Panc1 (cell line): ENCODE measurements at regions of chr1 and their contacts with region 1.

Region 1: DNA sequence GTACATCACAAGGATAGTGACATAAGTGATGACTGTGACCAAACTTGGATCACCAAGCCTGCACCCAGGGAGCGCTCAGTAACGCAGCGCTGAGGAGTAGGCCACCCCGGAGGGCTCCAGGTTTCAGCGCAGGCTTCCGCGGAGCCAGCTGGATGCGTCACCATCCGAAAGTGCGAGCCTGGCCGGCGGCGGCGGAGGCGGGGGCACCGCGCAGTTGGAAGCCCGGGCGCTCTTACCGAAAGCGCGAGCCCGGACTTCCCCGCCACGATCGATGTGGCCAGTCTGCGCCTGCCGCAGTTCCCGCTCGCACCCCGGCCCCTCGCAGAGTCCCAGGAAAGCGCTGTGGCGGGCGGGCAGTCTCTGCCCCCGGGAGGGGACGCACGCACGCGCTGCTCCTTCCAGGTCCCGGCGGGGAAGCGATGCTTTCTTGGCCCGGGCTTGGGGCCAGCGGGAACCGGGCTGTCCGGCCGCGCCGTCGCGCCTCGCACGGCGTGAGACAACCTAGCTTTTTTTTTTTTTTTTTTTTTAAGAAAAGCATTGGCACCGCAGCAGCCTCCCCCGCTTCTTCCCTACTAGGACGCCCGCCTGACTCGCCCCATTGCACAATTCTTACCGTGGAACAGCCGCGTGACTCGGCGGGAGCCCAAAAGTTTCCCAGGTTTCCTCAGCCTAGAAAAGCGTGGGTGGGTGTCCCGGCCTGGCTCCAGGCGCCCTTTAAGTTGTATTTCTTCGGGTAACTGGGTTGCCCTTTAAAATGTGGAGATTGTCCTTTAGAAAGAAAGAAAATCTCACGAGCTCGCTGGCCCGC is 36.4 kb upstream of the JAK1 start:
- DNase-seq: peak; percentile 25
- ATAC-seq: peak; percentile 96
- H3K4me3 ChIP-seq: peak overlapping the region; percentile 54 to 69
- H3K27ac ChIP-seq: peak overlapping the region; percentile 81
- H3K4me1 ChIP-seq: peaks cover 5% of the 10 kb centered on the region
- H3K27me3 ChIP-seq: no peaks in the 10 kb centered on the region; the same call in 1 of the 2 replicates
- CTCF ChIP-seq: no peak

Region 2: GRCh38 chr1:64686828-64687724 is 315.6 kb before region 1 on chr1:
- CTCF ChIA-PET with region 1: no interaction called
- POLR2A ChIA-PET with region 1: no interaction called
- in situ Hi-C with region 1: no loop called
- intact Hi-C with region 1: no loop called
- DNase-seq: peak; percentile 30
- ATAC-seq: peak; percentile 81
- H3K4me3 ChIP-seq: no peak overlapping the region
- H3K27ac ChIP-seq: no peak overlapping the region
- H3K4me1 ChIP-seq: no peaks in the 10 kb centered on the region
- H3K27me3 ChIP-seq: no peaks in the 10 kb centered on the region
- CTCF ChIP-seq: peak; percentile 79

Region 3: GRCh38 chr1:64973061-64973647 is 29.6 kb before region 1 on chr1:
- CTCF ChIA-PET with region 1: no interaction called
- POLR2A ChIA-PET with region 1: interaction called, 10 read pairs
- in situ Hi-C with region 1: no loop called
- intact Hi-C with region 1: no loop called
- DNase-seq: no peak
- ATAC-seq: no peak
- H3K4me3 ChIP-seq: no peak overlapping the region
- H3K27ac ChIP-seq: no peak overlapping the region
- H3K4me1 ChIP-seq: no peaks in the 10 kb centered on the region
- H3K27me3 ChIP-seq: no peaks in the 10 kb centered on the region
- CTCF ChIP-seq: no peak

Region 4: DNA sequence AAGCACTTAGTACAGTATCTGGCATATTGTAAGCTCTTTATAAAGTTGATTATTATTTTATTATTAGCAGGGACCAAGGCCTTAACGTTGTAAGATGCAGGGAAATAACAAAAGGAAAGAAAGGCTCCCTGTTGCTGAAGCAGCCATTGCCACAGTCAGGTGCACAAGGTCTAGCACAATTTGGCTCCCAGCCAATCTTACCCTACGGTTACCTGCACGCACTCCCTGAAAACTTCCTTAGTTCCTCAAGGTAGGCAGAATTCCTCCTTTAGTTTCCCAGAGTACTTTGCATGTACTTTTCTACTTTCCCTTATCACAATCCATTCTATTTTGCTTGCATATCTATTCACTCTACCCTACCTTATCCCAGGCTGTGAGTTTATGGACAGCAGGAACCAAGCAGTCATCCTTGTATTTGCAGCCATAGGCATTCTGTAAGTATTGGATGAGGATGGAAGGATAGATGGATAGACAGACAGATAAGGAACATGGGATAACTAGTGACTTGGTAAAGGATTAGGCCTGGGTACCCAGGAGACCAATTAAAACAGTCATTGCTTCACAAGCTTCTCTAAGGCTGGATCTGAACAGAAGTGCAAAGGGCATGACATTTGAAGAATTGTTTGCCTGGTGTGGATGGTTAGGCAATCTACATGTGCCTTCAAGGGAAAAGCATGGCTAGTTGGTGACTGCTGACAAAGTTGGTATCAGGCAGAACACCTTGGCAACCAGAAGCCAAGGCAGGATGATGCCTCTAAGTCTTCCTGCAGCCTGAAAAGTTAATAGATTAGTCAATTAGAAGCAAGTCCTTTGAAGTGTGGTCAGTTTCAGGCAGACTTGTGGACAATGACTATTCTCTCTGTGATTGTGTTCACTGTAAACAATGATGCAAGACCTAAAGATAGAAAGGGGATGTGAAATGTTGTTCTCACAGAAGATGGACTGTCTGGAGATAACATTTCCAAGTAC is 15.5 kb before region 1 on chr1:
- CTCF ChIA-PET with region 1: no interaction called
- POLR2A ChIA-PET with region 1: interaction called, 3 read pairs
- in situ Hi-C with region 1: no loop called
- intact Hi-C with region 1: loop called (anchors 2 kb)
- DNase-seq: no peak
- ATAC-seq: no peak
- H3K4me3 ChIP-seq: no peak overlapping the region
- H3K27ac ChIP-seq: no peak overlapping the region
- H3K4me1 ChIP-seq: peaks cover 13% of the 10 kb centered on the region
- H3K27me3 ChIP-seq: no peaks in the 10 kb centered on the region
- CTCF ChIP-seq: no peak

Region 5: DNA sequence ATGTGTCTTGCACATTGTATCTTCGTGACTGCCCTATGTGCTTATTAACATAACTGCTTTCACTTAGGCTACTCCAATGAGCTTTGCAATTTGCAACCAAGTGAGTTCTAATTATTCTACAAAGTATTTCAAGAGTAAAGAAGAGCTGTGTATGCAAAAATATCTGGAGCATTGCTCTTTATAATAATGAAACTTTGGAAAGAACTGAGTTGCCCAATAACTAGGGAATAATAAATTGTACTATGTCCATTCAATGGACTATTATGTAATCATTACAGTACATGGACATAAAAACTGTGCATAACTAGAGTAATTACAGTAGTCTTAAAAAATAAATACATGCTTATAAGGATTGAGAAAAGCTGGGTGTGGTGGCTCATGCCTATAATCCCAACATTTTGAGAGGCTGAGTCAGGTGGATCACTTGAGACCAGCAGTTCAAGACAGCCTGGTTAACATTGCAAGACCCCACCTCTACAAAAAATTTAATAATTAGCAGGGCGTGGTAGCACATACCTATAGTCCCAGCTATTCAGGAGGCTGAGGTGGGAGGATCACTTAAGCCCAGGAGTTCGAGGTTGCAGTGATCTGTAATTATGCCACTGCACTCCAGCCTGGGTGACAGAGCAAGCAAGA is 34.0 kb after region 1 on chr1:
- CTCF ChIA-PET with region 1: no interaction called
- POLR2A ChIA-PET with region 1: no interaction called
- in situ Hi-C with region 1: no loop called
- intact Hi-C with region 1: loop called (anchors 1 kb)
- DNase-seq: no peak
- ATAC-seq: no peak
- H3K4me3 ChIP-seq: no peak overlapping the region
- H3K27ac ChIP-seq: no peak overlapping the region
- H3K4me1 ChIP-seq: no peaks in the 10 kb centered on the region
- H3K27me3 ChIP-seq: no peaks in the 10 kb centered on the region
- CTCF ChIP-seq: no peak